Esophagus squamous epithelium (tissue), 5 donors: ENCODE measurements at regions of chr6 and their contacts with region 1.

Region 1: GRCh38 chr6:168370310-168370991 is 50.9 kb upstream of the DACT2 start:
- DNase-seq: no peak
- H3K4me3 ChIP-seq: no peak overlapping the region
- H3K27ac ChIP-seq: no peak overlapping the region
- H3K4me1 ChIP-seq: peaks cover 0 to 31% (median 0%) of the 10 kb centered on the region in 3 donors
- H3K27me3 ChIP-seq: peaks cover 0 to 31% (median 0%) of the 10 kb centered on the region in 4 donors
- CTCF ChIP-seq: peak; percentile 53 to 96 (median 89)
- POLR2A ChIP-seq: no peak

Region 2: GRCh38 chr6:167892835-167893815 is 477.3 kb before region 1 on chr6:
- intact Hi-C with region 1: no loop called
- DNase-seq: no peak
- H3K4me3 ChIP-seq: no peak overlapping the region
- H3K27ac ChIP-seq: no peak overlapping the region
- H3K4me1 ChIP-seq: peaks cover 0 to 12% (median 0%) of the 10 kb centered on the region in 3 donors
- H3K27me3 ChIP-seq: no peaks in the 10 kb centered on the region
- CTCF ChIP-seq: no peak
- POLR2A ChIP-seq: no peak

Region 3: DNA sequence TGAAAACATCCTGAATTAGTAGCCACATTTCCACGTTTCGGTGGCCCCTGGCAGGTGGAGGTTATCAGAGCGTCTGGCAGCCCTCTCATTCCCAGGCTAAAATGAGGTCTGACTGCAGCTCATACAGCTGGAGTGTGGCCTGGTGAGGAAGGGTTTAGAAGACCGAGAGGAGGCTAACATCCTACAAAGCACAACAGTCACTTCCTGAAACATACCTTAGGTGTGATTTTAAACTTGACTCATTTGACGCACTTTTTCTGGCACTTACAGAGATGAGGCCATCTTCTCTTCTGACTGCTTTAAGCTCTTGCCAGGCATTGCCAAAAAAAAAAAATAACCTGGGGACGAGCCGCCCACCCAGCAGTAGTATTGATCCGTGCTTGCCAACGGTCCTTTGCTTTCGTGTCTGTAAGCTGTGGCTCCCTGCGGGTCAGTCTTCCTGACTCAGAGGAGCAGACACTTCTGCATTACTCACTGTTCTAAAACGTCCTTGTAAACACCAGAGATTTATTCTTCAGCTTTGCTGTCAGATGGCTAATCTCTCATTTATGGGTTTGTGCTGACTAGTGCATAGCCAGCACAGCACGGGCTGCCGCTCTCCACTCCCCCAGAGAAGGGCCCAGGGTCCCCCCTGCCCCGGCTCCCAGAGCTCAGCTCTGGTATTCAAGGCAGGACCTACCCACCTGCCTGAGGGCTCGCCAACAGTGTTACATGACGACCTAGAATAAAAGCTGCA is 213.0 kb before region 1 on chr6:
- intact Hi-C with region 1: loop called (anchors 10 kb)
- DNase-seq: no peak
- H3K4me3 ChIP-seq: peak overlapping the region in 1 of 4 donors; percentile 32
- H3K27ac ChIP-seq: peak overlapping the region in 2 of 4 donors; percentile 1 to 59
- H3K4me1 ChIP-seq: peaks cover 9 to 35% (median 16%) of the 10 kb centered on the region in 3 donors
- H3K27me3 ChIP-seq: peaks cover 0 to 22% (median 0%) of the 10 kb centered on the region in 4 donors
- CTCF ChIP-seq: no peak
- POLR2A ChIP-seq: no peak

Region 4: DNA sequence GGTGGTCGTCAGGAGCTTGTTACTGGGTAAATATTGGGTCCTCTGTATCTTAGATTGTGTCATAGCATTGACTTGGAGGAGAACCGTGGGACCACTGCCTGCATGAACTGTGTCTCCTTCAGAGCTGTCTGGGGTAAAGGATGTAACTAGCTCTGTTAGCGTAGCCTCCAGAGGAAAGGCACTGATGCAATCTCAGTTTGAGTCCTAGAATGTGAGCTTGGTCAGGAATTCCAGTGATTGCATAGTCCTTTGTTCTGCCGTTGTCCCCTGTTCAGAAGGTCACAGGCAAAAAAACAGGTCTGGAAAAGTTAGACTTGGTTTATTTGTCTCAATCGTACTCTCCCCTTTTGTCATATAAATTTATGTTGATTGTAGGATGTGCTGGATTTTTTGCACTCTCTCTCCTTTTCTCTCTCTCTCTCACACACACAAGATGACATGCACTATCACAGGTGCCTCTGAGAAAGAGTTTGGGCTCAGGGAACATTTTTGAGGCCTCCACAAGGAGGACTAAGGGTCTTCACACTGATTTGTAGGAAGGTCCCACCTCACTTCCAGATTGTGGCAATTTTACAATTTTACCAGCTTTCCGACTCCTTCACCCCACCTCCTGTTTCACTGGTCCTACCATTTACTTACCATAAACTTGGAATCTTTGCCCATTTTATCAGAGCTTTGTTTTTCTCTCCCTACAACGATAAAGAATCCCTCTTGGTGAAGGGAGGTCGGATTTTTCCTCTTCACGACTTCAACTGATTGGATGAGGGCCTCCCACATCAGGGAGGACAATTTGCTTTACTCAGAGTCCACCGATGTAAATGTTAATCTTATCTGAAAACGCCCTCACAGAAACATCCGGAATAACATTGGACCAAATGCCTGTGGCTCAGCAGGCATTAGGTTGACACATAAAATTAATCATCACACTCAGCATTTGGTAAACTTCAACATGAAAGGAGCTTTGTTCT is 43.9 kb before region 1 on chr6:
- intact Hi-C with region 1: no loop called
- DNase-seq: no peak
- H3K4me3 ChIP-seq: no peak overlapping the region
- H3K27ac ChIP-seq: no peak overlapping the region
- H3K4me1 ChIP-seq: no peaks in the 10 kb centered on the region
- H3K27me3 ChIP-seq: peaks cover 0 to 29% (median 0%) of the 10 kb centered on the region in 4 donors
- CTCF ChIP-seq: no peak
- POLR2A ChIP-seq: no peak

Region 5: GRCh38 chr6:168884646-168885086 is 514.2 kb after region 1 on chr6:
- intact Hi-C with region 1: loop called (anchors 5 kb)
- DNase-seq: no peak
- H3K4me3 ChIP-seq: peak overlapping the region in 2 of 4 donors; percentile 24 to 58
- H3K27ac ChIP-seq: no peak overlapping the region
- H3K4me1 ChIP-seq: peaks cover 0 to 7% (median 3%) of the 10 kb centered on the region in 3 donors
- H3K27me3 ChIP-seq: peaks cover 0 to 45% (median 0%) of the 10 kb centered on the region in 4 donors
- CTCF ChIP-seq: peak; percentile 64 to 97 (median 92)
- POLR2A ChIP-seq: no peak